ENCODE measurements at regions of chr21 and their contacts with region 1.

Region 1: GRCh38 chr21:41895643-41896493 is 16.7 kb upstream of the PRDM15 start:
- DNase-seq: peak; percentile 25 to 85 (median 67)
- ATAC-seq: peak; percentile 99 to 100
- H3K4me3 Mint-ChIP-seq: peak overlapping the region in 9 of 10 donors; percentile 16 to 86 (median 67)
- H3K27ac Mint-ChIP-seq: peak overlapping the region; percentile 36 to 92 (median 86)
- H3K4me1 Mint-ChIP-seq: peaks cover 20 to 48% (median 31%) of the 10 kb centered on the region in 4 donors
- H3K27me3 Mint-ChIP-seq: no peaks in the 10 kb centered on the region

Region 2: GRCh38 chr21:41816220-41817165 is 79.4 kb before region 1 on chr21:
- POLR2A ChIA-PET with region 1: no interaction called
- DNase-seq: peak; percentile 25 to 76 (median 56)
- ATAC-seq: peak; percentile 81 to 94
- H3K4me3 Mint-ChIP-seq: no peak overlapping the region
- H3K27ac Mint-ChIP-seq: peak overlapping the region in 4 of 10 donors; percentile 33 to 67 (median 57)
- H3K4me1 Mint-ChIP-seq: peaks cover 2 to 9% (median 8%) of the 10 kb centered on the region in 4 donors
- H3K27me3 Mint-ChIP-seq: no peaks in the 10 kb centered on the region

Region 3: GRCh38 chr21:41835711-41836154 is 60.1 kb before region 1 on chr21:
- POLR2A ChIA-PET with region 1: no interaction called
- DNase-seq: no peak
- ATAC-seq: no peak
- H3K4me3 Mint-ChIP-seq: no peak overlapping the region
- H3K27ac Mint-ChIP-seq: peak overlapping the region in 1 of 10 donors; percentile 24
- H3K4me1 Mint-ChIP-seq: peaks cover 0 to 3% (median 0%) of the 10 kb centered on the region in 4 donors
- H3K27me3 Mint-ChIP-seq: no peaks in the 10 kb centered on the region

Region 4: GRCh38 chr21:41879190-41879998 is 16.5 kb before region 1 on chr21 and contains the start of gene PRDM15:
- POLR2A ChIA-PET with region 1: interaction called, 12 read pairs
- DNase-seq: peak; percentile 58 to 87 (median 78)
- ATAC-seq: peak; percentile 72 to 78
- H3K4me3 Mint-ChIP-seq: peak within 1 kb of the TSS; percentile 81 to 95 (median 91)
- H3K27ac Mint-ChIP-seq: peak within 1 kb of the TSS; percentile 88 to 97 (median 95)
- H3K4me1 Mint-ChIP-seq: peaks cover 14 to 44% (median 32%) of the 10 kb centered on the region in 4 donors
- H3K27me3 Mint-ChIP-seq: no peaks in the 10 kb centered on the region
- polyA plus RNA-seq, gene PRDM15: 0.77 to 2.9 (median 2.4) TPM

Region 5: DNA sequence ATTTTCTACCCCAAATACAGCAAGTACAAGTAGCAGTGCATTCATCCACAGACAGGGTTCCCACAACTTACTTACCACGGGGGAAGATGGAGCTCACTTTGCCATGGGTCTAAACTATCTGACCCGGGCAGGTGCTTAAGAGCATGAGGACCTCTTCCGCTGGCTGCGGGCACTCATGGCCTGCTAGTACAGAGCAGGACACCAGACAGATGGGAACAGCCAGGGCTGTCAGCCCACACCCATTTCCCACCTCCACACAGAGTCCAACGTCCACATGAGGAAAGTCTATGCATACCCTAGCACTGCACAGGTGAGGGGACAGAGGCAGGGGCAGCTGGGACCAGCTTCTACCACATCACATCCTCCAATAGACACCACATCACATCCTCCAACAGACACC is 19.1 kb after region 1 on chr21:
- POLR2A ChIA-PET with region 1: no interaction called
- DNase-seq: no peak
- ATAC-seq: no peak
- H3K4me3 Mint-ChIP-seq: no peak overlapping the region
- H3K27ac Mint-ChIP-seq: peak overlapping the region in 1 of 10 donors; percentile 65
- H3K4me1 Mint-ChIP-seq: no peaks in the 10 kb centered on the region
- H3K27me3 Mint-ChIP-seq: no peaks in the 10 kb centered on the region

Region 6: GRCh38 chr21:41926117-41926806 is 30.4 kb after region 1 on chr21:
- POLR2A ChIA-PET with region 1: interaction called, 11 read pairs
- DNase-seq: peak in 6 of 10 donors; percentile 27 to 71 (median 49)
- ATAC-seq: peak; percentile 88 to 95
- H3K4me3 Mint-ChIP-seq: peak overlapping the region; percentile 89 to 96 (median 95)
- H3K27ac Mint-ChIP-seq: peak overlapping the region; percentile 96 to 100 (median 99)
- H3K4me1 Mint-ChIP-seq: peaks cover 20 to 86% (median 45%) of the 10 kb centered on the region in 4 donors
- H3K27me3 Mint-ChIP-seq: peaks cover 0 to 2% (median 0%) of the 10 kb centered on the region in 5 donors

Region 7: GRCh38 chr21:42097860-42098454 is 202.1 kb after region 1 on chr21:
- POLR2A ChIA-PET with region 1: no interaction called
- DNase-seq: no peak
- ATAC-seq: no peak
- H3K4me3 Mint-ChIP-seq: no peak overlapping the region
- H3K27ac Mint-ChIP-seq: no peak overlapping the region
- H3K4me1 Mint-ChIP-seq: peaks cover 0 to 8% (median 4%) of the 10 kb centered on the region in 4 donors
- H3K27me3 Mint-ChIP-seq: no peaks in the 10 kb centered on the region